ENCODE measurements at regions of chr11 and their contacts with region 1.

Region 1: GRCh38 chr11:18588297-18589252 is at the start of gene UEVLD:
- DNase-seq: peak; percentile 63
- H3K4me3 Mint-ChIP-seq: no peak within 1 kb of the TSS
- H3K27ac Mint-ChIP-seq: no peak within 1 kb of the TSS
- H3K4me1 Mint-ChIP-seq: peaks cover 8% of the 10 kb centered on the region
- H3K27me3 Mint-ChIP-seq: no peaks in the 10 kb centered on the region
- total RNA-seq, gene UEVLD: 8.9 to 9.2 TPM

Region 2: GRCh38 chr11:18567081-18567480 is 21.5 kb before region 1 on chr11:
- CTCF ChIA-PET with region 1: no interaction called
- intact Hi-C with region 1: no loop called
- DNase-seq: no peak
- H3K4me3 Mint-ChIP-seq: no peak overlapping the region
- H3K27ac Mint-ChIP-seq: no peak overlapping the region
- H3K4me1 Mint-ChIP-seq: no peaks in the 10 kb centered on the region
- H3K27me3 Mint-ChIP-seq: no peaks in the 10 kb centered on the region

Region 3: DNA sequence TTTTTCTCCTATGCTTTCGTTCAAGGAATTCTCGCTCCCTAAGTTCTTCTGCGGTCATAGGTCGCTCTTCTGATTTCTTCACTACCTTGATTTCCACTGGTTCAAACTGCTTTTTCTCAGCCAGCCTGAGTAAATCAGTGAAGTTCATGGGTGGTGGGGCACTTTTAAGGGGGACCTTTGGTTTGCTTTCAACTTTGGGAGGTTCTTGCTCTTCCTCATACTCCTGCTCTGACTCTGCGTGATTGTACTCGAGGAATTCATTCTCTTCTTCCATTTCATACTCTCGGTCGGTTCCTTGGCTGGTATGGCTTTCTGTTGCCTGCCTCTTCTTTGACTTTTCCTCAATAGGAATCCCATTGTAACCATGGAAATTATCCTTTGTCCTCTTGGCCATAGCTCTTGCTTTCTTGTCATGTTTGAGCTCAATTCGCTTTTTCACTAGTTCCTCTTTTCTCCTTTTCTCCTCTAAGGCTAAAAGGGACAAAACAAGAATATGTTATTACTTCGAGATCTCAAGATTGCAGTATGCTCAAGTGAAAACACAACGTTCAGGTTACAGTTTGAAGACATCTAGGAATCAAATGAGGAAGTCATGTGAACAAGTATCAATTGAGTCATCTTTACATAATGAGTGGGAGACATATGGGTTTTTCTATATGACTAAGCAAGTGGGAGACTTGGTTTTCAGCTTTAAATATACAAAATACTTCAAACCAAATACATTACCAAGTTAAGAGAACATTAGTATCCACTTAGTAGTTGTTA is 27.2 kb after region 1 on chr11:
- CTCF ChIA-PET with region 1: interaction called, 3 read pairs
- intact Hi-C with region 1: loop called (anchors 1 kb)
- DNase-seq: no peak
- H3K4me3 Mint-ChIP-seq: no peak overlapping the region
- H3K27ac Mint-ChIP-seq: peak overlapping the region; percentile 78
- H3K4me1 Mint-ChIP-seq: peaks cover 46% of the 10 kb centered on the region
- H3K27me3 Mint-ChIP-seq: no peaks in the 10 kb centered on the region

Region 4: GRCh38 chr11:18710545-18710944 is 122.0 kb after region 1 on chr11:
- CTCF ChIA-PET with region 1: no interaction called
- intact Hi-C with region 1: no loop called
- DNase-seq: peak; percentile 30
- H3K4me3 Mint-ChIP-seq: no peak overlapping the region
- H3K27ac Mint-ChIP-seq: no peak overlapping the region
- H3K4me1 Mint-ChIP-seq: peaks cover 14% of the 10 kb centered on the region
- H3K27me3 Mint-ChIP-seq: no peaks in the 10 kb centered on the region